ENCODE measurements at regions of chr3 and their contacts with region 1.

Region 1: GRCh38 chr3:14780927-14781507 is 37.7 kb upstream of the FGD5 start:
- DNase-seq: peak; percentile 50
- H3K4me3 Mint-ChIP-seq: no peak overlapping the region
- H3K27ac Mint-ChIP-seq: no peak overlapping the region
- H3K4me1 Mint-ChIP-seq: no peaks in the 10 kb centered on the region
- H3K27me3 Mint-ChIP-seq: peaks cover 7% of the 10 kb centered on the region

Region 2: DNA sequence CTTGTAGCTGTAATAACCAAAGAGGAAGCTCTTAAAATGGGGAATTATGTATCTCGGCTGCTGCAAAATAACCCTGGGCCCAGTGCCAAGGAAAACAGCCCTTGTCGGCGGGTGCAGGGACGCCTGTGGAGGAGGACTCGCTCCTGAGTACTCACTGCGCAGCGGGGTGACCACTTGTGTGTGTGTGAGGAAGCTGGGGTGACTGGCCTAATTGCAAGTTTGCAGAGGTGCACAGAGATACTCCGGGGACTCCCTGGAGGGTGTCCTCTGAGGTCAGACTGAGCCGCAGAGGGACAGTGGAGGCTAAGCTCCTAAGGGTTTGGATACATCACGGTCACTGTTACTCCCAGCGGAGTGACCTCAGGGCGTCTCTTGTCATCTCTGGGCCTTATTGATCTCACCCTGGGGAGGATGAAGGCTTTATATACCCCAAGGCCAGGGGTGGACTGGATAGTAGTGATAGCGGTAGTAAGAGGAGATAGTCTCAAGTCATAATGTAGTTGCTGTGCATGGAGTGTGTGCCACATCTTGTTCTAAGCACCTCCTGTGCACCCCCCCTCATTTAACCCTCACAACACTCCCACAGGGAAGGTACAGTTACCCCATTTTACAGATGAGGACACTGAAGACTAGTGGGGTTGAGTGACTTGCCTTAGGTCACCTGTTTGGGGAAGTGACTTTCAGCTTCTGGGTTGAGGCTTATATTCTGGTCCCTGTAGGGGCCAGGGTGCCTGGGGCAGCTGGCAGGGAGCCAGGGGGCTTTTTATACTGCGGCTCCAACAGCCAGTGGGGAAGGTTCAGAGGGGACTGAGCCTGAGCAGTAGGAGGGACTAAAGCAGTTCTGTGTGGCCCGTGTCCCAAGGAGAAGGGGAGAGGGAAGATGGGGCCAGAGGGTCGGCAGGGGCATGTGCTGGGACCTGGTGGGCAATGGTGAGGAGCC is 341.2 kb before region 1 on chr3:
- CTCF ChIA-PET with region 1: no interaction called
- POLR2A ChIA-PET with region 1: no interaction called
- intact Hi-C with region 1: no loop called
- DNase-seq: no peak
- H3K4me3 Mint-ChIP-seq: no peak overlapping the region
- H3K27ac Mint-ChIP-seq: no peak overlapping the region
- H3K4me1 Mint-ChIP-seq: peaks cover 18% of the 10 kb centered on the region
- H3K27me3 Mint-ChIP-seq: no peaks in the 10 kb centered on the region

Region 3: GRCh38 chr3:14587740-14588360 is 193.2 kb before region 1 on chr3:
- CTCF ChIA-PET with region 1: no interaction called
- POLR2A ChIA-PET with region 1: no interaction called
- intact Hi-C with region 1: no loop called
- DNase-seq: no peak
- H3K4me3 Mint-ChIP-seq: no peak overlapping the region
- H3K27ac Mint-ChIP-seq: no peak overlapping the region
- H3K4me1 Mint-ChIP-seq: no peaks in the 10 kb centered on the region
- H3K27me3 Mint-ChIP-seq: peaks cover 6% of the 10 kb centered on the region

Region 4: GRCh38 chr3:14633819-14634424 is 147.1 kb before region 1 on chr3:
- CTCF ChIA-PET with region 1: interaction called, 3 read pairs
- POLR2A ChIA-PET with region 1: no interaction called
- intact Hi-C with region 1: loop called (anchors 5 kb)
- DNase-seq: peak; percentile 69
- H3K4me3 Mint-ChIP-seq: no peak overlapping the region
- H3K27ac Mint-ChIP-seq: no peak overlapping the region
- H3K4me1 Mint-ChIP-seq: no peaks in the 10 kb centered on the region
- H3K27me3 Mint-ChIP-seq: peaks cover 20% of the 10 kb centered on the region

Region 5: GRCh38 chr3:14791343-14791945 is 10.4 kb after region 1 on chr3:
- CTCF ChIA-PET with region 1: interaction called, 13 read pairs
- POLR2A ChIA-PET with region 1: no interaction called
- intact Hi-C with region 1: no loop called
- DNase-seq: peak; percentile 72
- H3K4me3 Mint-ChIP-seq: no peak overlapping the region
- H3K27ac Mint-ChIP-seq: no peak overlapping the region
- H3K4me1 Mint-ChIP-seq: no peaks in the 10 kb centered on the region
- H3K27me3 Mint-ChIP-seq: peaks cover 18% of the 10 kb centered on the region